ENCODE measurements at regions of chr2 and their contacts with region 1.

Region 1: GRCh38 chr2:142877216-142877756 is at the start of gene KYNU:
- DNase-seq: no peak
- H3K4me3 ChIP-seq: no peak within 1 kb of the TSS
- H3K27ac ChIP-seq: no peak within 1 kb of the TSS; the same call in 1 of the 2 replicates
- H3K4me1 ChIP-seq: peaks cover 43% of the 10 kb centered on the region
- H3K27me3 ChIP-seq: no peaks in the 10 kb centered on the region
- CTCF ChIP-seq: no peak
- total RNA-seq, gene KYNU: 44.5 and 55.7 TPM in 2 replicates

Region 2: GRCh38 chr2:142682528-142682927 is 194.8 kb before region 1 on chr2:
- CTCF ChIA-PET with region 1: no interaction called
- POLR2A ChIA-PET with region 1: no interaction called
- intact Hi-C with region 1: loop called (anchors 5 kb)
- DNase-seq: no peak
- H3K4me3 ChIP-seq: no peak overlapping the region
- H3K27ac ChIP-seq: no peak overlapping the region
- H3K4me1 ChIP-seq: no peaks in the 10 kb centered on the region
- H3K27me3 ChIP-seq: no peaks in the 10 kb centered on the region
- CTCF ChIP-seq: peak; percentile 47; the same call in 1 of the 2 replicates

Region 3: GRCh38 chr2:142796161-142796560 is 81.1 kb before region 1 on chr2:
- CTCF ChIA-PET with region 1: no interaction called
- POLR2A ChIA-PET with region 1: no interaction called
- intact Hi-C with region 1: loop called (anchors 5 kb)
- DNase-seq: no peak
- H3K4me3 ChIP-seq: no peak overlapping the region
- H3K27ac ChIP-seq: no peak overlapping the region
- H3K4me1 ChIP-seq: no peaks in the 10 kb centered on the region
- H3K27me3 ChIP-seq: no peaks in the 10 kb centered on the region
- CTCF ChIP-seq: no peak

Region 4: GRCh38 chr2:142857247-142858154 is 19.8 kb before region 1 on chr2:
- CTCF ChIA-PET with region 1: no interaction called
- POLR2A ChIA-PET with region 1: interaction called, 12 read pairs
- intact Hi-C with region 1: no loop called
- DNase-seq: peak in 1 of 2 experiments; percentile 77
- H3K4me3 ChIP-seq: peak overlapping the region; percentile 22
- H3K27ac ChIP-seq: peak overlapping the region; percentile 87
- H3K4me1 ChIP-seq: peaks cover 34% of the 10 kb centered on the region
- H3K27me3 ChIP-seq: no peaks in the 10 kb centered on the region
- CTCF ChIP-seq: no peak

Region 5: DNA sequence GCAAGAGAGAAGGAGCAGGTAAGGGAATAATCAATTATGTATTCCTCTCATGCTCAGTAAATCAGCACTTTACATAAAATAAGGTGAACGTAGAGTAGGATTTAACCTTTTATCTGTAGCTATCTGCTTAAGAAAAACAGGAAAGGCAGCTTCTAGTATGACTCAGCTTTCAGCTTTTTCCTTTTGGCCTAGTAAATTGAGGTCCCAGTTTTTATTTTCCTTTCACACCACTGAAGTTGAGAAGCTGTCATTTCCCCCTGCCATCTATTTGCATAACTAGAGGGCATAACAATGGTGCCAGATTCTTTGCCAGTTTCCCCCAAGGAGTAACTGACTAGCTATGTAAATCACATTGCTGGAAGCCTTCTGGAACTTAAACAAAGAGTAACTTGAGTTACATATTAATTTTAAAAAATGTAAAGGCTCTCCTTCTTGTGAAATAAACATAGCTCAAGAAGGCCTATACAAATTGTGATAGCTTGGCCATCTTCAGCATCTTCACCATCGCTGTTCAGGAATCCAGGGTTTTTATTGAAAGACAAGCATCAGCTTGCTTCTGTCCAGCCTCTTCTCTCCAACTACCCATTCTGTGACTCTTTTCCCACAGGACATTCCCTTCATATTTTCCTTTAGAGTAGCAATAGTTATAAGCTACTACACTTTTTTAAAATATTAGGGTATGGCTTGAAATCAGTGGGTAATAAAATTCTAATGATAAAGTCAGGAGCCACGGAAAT is 97.2 kb after region 1 on chr2:
- CTCF ChIA-PET with region 1: no interaction called
- POLR2A ChIA-PET with region 1: no interaction called
- intact Hi-C with region 1: loop called (anchors 1 kb)
- DNase-seq: peak; percentile 45 to 97
- H3K4me3 ChIP-seq: peak overlapping the region; percentile 46
- H3K27ac ChIP-seq: peak overlapping the region; percentile 99
- H3K4me1 ChIP-seq: peaks cover 52% of the 10 kb centered on the region
- H3K27me3 ChIP-seq: no peaks in the 10 kb centered on the region
- CTCF ChIP-seq: no peak

Measured in PC-9 (cell line).